Activated CD4-positive, alpha-beta memory T cell treated with anti-CD3 and anti-CD28 coated beads, Interleukin-2, amount 10 ng/mL, durations not matched to agents 7 days and 5 days (primary cell): ENCODE measurements at regions of chr4 and their contacts with region 1.

Region 1: DNA sequence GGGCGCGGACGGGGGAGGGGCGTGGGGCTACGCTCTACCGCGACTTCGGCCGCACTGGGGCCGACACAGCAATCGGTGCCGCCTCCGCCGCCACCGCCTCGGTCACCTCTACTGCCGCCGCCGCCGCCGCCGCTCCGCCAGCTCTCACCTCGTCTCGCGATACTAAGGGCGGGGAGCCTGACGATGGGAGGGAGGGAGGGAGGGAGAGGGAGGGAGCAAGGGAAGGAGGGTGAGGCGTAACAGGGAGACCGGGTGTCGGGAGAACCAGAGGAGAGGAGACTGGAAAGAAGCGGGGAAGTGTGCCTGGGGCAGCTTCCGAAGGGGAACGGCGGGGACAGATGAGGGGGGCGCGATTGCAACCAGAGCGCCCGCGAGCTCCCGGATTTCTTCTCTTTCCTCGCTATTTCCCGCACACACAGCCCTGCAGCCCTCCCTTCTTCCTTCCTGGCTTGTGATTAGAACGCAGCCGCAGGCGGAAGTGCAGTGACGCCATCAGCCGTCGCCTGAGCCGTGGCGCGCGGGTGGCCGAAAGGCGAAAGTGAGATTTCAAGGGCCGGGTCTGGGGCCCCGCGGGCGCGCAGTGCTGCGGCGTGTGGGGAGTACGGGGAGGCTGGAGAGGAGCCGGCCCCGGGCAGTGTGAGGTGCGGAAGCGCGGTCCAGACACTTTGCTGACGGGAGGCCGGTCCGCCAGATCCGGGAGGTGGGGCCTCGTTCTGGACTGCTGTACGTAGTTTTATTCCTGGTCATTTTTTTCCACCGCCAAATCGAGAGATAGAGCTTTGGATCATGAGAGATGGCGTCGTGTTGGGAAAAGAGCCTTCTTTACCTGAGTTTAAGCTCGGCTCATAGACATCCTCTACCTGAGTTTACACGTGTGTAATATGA is at the start of gene ANKRD17:
- DNase-seq: peak; percentile 93
- H3K4me3 Mint-ChIP-seq: peak within 1 kb of the TSS; percentile 100
- H3K27ac Mint-ChIP-seq: peak within 1 kb of the TSS; percentile 100
- H3K4me1 Mint-ChIP-seq: peaks cover 40% of the 10 kb centered on the region
- H3K27me3 Mint-ChIP-seq: no peaks in the 10 kb centered on the region
- total RNA-seq, gene ANKRD17: 45.8 to 46.6 TPM

Region 2: GRCh38 chr4:73127839-73128453 is 131.0 kb before region 1 on chr4:
- CTCF ChIA-PET with region 1: interaction called, 26 read pairs
- POLR2A ChIA-PET with region 1: interaction called, 7 read pairs
- DNase-seq: no peak
- H3K4me3 Mint-ChIP-seq: no peak overlapping the region
- H3K27ac Mint-ChIP-seq: no peak overlapping the region
- H3K4me1 Mint-ChIP-seq: peaks cover 2% of the 10 kb centered on the region
- H3K27me3 Mint-ChIP-seq: no peaks in the 10 kb centered on the region

Region 3: DNA sequence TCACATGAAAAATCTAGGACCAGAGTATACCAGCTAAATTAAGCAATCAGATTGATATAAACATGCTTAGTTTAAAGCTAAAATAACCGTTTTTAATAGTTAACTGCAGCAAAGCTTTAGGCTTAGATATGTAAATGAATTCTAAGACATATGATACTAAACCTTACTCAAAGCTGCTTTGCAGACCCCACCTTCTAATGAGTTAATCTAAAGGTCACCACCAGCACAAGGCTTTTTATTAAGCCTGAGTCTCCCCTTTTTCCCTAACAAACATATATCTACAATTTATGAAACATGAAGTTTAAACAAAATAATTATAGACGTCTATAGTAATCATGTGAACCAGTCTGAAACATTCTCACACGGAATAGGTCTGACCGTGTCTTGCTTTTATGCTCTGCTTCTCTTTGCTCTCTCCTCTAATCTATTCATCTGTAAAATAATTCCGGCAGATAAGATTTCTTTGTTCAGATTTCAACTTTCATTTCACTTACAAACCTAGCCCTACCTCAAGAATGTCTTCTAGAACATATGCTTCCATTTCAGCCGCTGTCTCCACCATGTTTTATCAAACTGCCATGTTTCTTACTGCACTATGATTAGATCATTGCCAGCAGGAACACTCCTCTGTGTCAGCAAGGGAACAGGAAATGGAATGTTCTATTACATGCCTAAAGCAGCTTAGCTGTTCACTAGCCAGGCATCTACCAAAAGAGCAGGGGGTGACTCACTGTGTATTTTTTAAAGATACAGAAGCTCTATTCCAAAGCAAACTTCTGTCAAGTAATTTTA is 36.3 kb before region 1 on chr4:
- CTCF ChIA-PET with region 1: interaction called, 13 read pairs
- POLR2A ChIA-PET with region 1: interaction called, 41 read pairs
- DNase-seq: peak; percentile 62
- H3K4me3 Mint-ChIP-seq: no peak overlapping the region
- H3K27ac Mint-ChIP-seq: no peak overlapping the region
- H3K4me1 Mint-ChIP-seq: peaks cover 20% of the 10 kb centered on the region
- H3K27me3 Mint-ChIP-seq: no peaks in the 10 kb centered on the region